ENCODE measurements at regions of chr2 and their contacts with region 1.

Region 1: DNA sequence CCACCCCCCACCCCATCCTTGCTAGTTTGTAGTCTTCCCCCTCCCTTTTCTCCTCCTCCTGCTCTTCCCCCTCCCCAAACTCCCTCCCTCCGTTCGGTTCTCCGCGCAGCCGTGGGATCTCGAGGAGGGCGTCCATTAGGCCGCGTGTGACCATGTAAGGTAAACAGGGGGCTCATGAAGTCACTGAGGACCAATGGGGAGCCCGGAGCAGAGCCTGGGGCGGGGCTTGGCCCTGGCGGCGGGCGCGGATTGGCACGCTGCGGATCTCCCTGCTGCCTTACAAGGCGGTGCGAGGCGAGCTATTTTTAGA is 246 bp upstream of the KLF7 start:
- DNase-seq: peak; percentile 99
- H3K4me3 ChIP-seq: peak overlapping the region; percentile 81 to 85
- H3K27ac ChIP-seq: peak overlapping the region; percentile 100
- H3K4me1 ChIP-seq: no peaks in the 10 kb centered on the region
- H3K27me3 ChIP-seq: no peaks in the 10 kb centered on the region
- CTCF ChIP-seq: no peak
- POLR2A ChIP-seq: no peak

Region 2: DNA sequence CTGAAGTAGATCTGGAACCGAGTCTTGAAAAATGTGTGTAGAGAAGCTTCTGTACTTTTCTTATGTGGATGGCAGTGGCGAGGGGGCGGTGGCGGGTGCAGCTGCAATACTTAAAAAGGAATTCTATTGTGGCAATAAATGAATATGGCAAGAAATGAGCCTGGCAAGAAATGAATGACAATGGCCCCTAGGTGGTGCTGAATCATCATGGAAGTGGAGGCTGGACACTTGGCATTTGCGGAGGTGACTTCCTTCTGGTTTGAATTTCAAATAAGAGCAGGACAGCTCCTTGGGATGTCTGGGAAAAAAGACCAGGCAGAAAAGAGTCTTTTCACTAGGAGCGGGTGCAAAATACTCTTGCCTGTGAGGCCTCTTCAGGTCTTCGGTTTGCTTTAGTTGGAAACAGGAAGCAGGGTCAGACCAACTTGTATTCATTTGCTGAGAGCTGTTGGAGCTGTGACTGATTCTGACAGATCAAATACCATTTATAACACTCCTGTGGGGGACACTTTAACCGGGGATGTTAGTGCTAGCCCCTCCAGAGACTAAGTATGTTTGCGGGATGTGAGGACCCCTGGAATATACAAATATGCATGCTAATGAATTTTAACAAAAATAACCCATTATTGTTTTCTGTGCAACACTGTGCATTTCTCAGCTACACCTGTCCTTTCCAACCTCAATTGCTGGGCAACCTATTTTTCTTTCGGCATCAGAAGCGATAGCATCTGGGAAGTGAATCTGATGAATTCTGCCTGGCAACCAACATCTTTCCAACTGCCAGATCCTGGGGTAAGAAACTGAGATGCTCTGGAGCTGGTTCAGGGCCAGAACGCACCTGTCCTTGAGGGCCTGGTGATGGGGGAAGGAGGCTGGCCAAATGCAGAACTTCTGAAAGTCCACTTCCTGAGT is 365.2 kb before region 1 on chr2:
- intact Hi-C with region 1: loop called (anchors 5 kb)
- DNase-seq: peak; percentile 57
- H3K4me3 ChIP-seq: no peak overlapping the region
- H3K27ac ChIP-seq: no peak overlapping the region
- H3K4me1 ChIP-seq: no peaks in the 10 kb centered on the region
- H3K27me3 ChIP-seq: no peaks in the 10 kb centered on the region
- CTCF ChIP-seq: peak; percentile 18 to 72 (median 60)
- POLR2A ChIP-seq: no peak

Region 3: GRCh38 chr2:207227062-207227748 is 61.2 kb after region 1 on chr2:
- intact Hi-C with region 1: loop called (anchors 5 kb)
- DNase-seq: no peak
- H3K4me3 ChIP-seq: no peak overlapping the region
- H3K27ac ChIP-seq: peak overlapping the region in 1 of 2 donors; percentile 14
- H3K4me1 ChIP-seq: peaks cover 10% of the 10 kb centered on the region
- H3K27me3 ChIP-seq: no peaks in the 10 kb centered on the region
- CTCF ChIP-seq: no peak
- POLR2A ChIP-seq: no peak

Region 4: GRCh38 chr2:207311316-207312005 is 145.5 kb after region 1 on chr2:
- intact Hi-C with region 1: loop called (anchors 10 kb)
- DNase-seq: no peak
- H3K4me3 ChIP-seq: no peak overlapping the region
- H3K27ac ChIP-seq: no peak overlapping the region
- H3K4me1 ChIP-seq: no peaks in the 10 kb centered on the region
- H3K27me3 ChIP-seq: no peaks in the 10 kb centered on the region
- CTCF ChIP-seq: no peak
- POLR2A ChIP-seq: no peak

Region 5: DNA sequence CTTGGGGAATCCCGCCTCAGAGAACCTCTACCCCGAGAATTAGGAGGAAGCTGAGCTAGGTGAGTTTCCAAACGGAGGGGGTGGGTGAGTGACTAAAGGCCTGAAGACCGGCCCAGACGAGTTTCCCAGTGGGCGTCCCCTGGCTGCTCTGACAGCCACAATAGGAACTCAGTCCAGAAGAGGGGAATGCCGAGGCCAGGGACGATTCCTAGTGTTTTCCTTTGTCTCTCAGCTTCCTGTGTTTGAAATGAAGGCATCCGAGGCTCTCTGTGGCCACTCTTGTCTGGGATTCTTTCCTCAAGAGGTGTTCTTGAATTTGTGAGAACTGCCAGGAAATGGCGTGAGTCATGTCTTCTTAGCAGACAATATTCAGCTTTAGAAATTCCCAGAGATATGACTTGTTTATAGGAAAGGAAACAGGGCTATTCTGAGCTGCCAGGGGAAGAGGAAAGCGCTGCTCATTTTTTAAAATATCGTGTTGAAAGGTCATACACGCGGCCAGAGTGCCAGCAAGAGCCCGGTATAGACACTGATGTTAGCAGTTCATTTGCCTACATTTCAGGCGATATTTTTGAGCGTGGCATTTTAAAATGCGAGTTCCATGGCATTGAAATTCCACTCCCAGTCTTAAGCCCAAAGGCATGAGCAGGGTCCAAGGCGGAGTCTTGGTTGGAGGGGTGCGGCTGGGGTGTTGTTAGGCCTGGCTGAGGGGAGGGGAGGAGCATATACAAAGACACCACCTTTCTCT is 168.8 kb after region 1 on chr2:
- intact Hi-C with region 1: no loop called
- DNase-seq: peak; percentile 24
- H3K4me3 ChIP-seq: no peak overlapping the region
- H3K27ac ChIP-seq: peak overlapping the region; percentile 34 to 36
- H3K4me1 ChIP-seq: no peaks in the 10 kb centered on the region
- H3K27me3 ChIP-seq: no peaks in the 10 kb centered on the region
- CTCF ChIP-seq: no peak
- POLR2A ChIP-seq: no peak

Region 6: GRCh38 chr2:207408086-207408794 is 242.2 kb after region 1 on chr2:
- intact Hi-C with region 1: no loop called
- DNase-seq: peak; percentile 88
- H3K4me3 ChIP-seq: no peak overlapping the region
- H3K27ac ChIP-seq: peak overlapping the region in 1 of 2 donors; percentile 17
- H3K4me1 ChIP-seq: no peaks in the 10 kb centered on the region
- H3K27me3 ChIP-seq: no peaks in the 10 kb centered on the region
- CTCF ChIP-seq: no peak
- POLR2A ChIP-seq: no peak

Region 7: GRCh38 chr2:207625018-207625907 is 459.3 kb after region 1 on chr2 and contains the start of gene METTL21A:
- intact Hi-C with region 1: loop called (anchors 10 kb)
- DNase-seq: peak; percentile 83
- H3K4me3 ChIP-seq: peak within 1 kb of the TSS; percentile 84 to 92
- H3K27ac ChIP-seq: peak within 1 kb of the TSS; percentile 95 to 96
- H3K4me1 ChIP-seq: no peaks in the 10 kb centered on the region
- H3K27me3 ChIP-seq: no peaks in the 10 kb centered on the region
- CTCF ChIP-seq: peak; percentile 7 to 64 (median 31)
- POLR2A ChIP-seq: peak; percentile 84
- total RNA-seq, gene METTL21A: 5.2 to 15.5 TPM

Measured in prostate gland (tissue), 2 donors.